ENCODE measurements at regions of chr4 and their contacts with region 1.

Region 1: DNA sequence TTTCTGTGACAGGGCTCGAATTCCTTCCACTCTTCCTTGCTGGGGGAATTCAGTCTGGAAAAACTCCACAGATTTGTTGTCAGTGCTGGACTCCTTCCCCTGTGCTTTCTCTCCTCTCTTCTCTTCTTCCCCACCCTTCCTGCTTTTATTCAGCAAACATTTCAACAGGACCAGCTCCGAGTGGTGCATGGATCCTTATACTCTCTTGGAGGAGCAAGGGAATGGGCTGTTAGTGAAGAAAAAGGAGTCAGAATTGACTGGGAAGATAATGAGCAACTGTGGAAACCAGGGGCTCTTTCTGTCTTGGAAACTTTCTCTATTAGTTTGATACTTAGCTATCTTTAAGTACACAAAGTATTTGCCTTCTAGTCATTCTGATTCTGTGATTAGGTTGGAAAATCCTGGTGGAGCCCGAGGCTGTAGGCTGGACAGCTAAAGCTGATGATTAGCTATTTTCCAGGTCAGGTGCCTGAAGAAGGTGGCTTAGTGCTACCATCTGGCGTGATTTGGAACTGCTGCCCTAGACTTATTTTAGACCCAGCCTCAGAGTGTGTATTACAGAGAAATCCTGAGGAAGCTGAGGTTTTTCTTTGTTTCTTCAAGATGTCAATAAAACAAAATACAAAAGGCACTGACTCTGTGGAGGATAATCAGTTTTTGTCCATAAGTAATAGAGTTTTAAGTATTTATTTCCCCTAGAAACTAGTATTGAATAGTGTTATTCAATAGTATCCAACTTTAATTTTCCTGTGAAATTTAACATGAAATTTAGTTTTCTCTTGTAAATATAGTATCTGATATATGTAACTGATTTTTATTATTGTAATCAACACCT is 38.4 kb downstream of the NAP1L5 start:
- DNase-seq: peak; percentile 51 to 88 (median 67)
- H3K4me3 ChIP-seq: no peak overlapping the region
- H3K27ac ChIP-seq: peak overlapping the region in 1 of 5 donors; percentile 40
- H3K4me1 ChIP-seq: peaks cover 0 to 4% of the 10 kb centered on the region in 2 donors
- H3K27me3 ChIP-seq: no peaks in the 10 kb centered on the region
- CTCF ChIP-seq: peak; percentile 77 to 85 (median 82)
- POLR2A ChIP-seq: no peak

Region 2: GRCh38 chr4:88143504-88143903 is 515.8 kb before region 1 on chr4:
- intact Hi-C with region 1: no loop called
- DNase-seq: no peak
- H3K4me3 ChIP-seq: no peak overlapping the region
- H3K27ac ChIP-seq: no peak overlapping the region
- H3K4me1 ChIP-seq: no peaks in the 10 kb centered on the region
- H3K27me3 ChIP-seq: no peaks in the 10 kb centered on the region
- CTCF ChIP-seq: no peak
- POLR2A ChIP-seq: no peak

Region 3: DNA sequence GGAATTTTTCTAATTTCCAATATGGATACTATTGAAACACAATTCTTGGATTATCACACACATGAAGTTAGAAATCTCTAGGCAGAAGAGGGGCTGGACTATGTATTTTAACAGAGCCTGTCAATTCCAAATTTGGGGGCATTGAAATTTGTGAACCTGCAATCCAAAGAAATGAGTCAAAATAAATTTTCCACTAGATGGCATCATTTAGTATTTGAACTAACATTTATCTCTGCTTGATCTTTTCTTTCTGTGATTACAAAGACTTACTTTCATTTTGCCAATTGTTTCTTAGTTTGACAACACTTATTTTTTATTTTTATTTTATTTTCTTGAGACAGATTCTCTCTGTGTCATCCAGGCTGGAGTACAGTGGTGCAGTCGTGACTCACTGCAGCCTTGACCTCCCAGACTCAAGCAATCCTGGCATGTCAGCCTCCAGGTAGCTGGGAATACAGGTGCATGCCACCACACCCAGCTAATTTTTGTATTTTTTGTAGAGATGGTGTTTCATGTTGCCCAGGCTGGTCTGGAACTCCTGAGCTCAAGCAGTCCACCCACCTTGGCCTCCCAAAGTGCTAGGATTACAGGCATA is 133.0 kb before region 1 on chr4:
- intact Hi-C with region 1: loop called (anchors 5 to 10 kb)
- DNase-seq: peak in 5 of 7 donors; percentile 22 to 61 (median 49)
- H3K4me3 ChIP-seq: no peak overlapping the region
- H3K27ac ChIP-seq: peak overlapping the region in 2 of 5 donors; percentile 51 to 60
- H3K4me1 ChIP-seq: peaks cover 17 to 35% of the 10 kb centered on the region in 2 donors
- H3K27me3 ChIP-seq: no peaks in the 10 kb centered on the region
- CTCF ChIP-seq: peak in 5 of 6 experiments; percentile 5 to 35 (median 31)
- POLR2A ChIP-seq: no peak

Region 4: GRCh38 chr4:88533937-88534750 is 125.1 kb before region 1 on chr4:
- intact Hi-C with region 1: loop called (anchors 5 to 10 kb)
- DNase-seq: no peak
- H3K4me3 ChIP-seq: no peak overlapping the region
- H3K27ac ChIP-seq: no peak overlapping the region
- H3K4me1 ChIP-seq: no peaks in the 10 kb centered on the region
- H3K27me3 ChIP-seq: no peaks in the 10 kb centered on the region
- CTCF ChIP-seq: no peak
- POLR2A ChIP-seq: no peak

Region 5: GRCh38 chr4:88549815-88550214 is 109.5 kb before region 1 on chr4:
- intact Hi-C with region 1: no loop called
- DNase-seq: no peak
- H3K4me3 ChIP-seq: no peak overlapping the region
- H3K27ac ChIP-seq: no peak overlapping the region
- H3K4me1 ChIP-seq: no peaks in the 10 kb centered on the region
- H3K27me3 ChIP-seq: no peaks in the 10 kb centered on the region
- CTCF ChIP-seq: no peak
- POLR2A ChIP-seq: no peak

Region 6: GRCh38 chr4:88591787-88592599 is 67.3 kb before region 1 on chr4 and contains the start of gene HERC3:
- intact Hi-C with region 1: loop called in 1 of 2 experiments (anchors 10 kb)
- DNase-seq: peak; percentile 92 to 95 (median 93)
- H3K4me3 ChIP-seq: peak within 1 kb of the TSS; percentile 67 to 84 (median 70)
- H3K27ac ChIP-seq: peak within 1 kb of the TSS; percentile 64 to 95 (median 93)
- H3K4me1 ChIP-seq: peaks cover 0 to 16% of the 10 kb centered on the region in 2 donors
- H3K27me3 ChIP-seq: no peaks in the 10 kb centered on the region
- CTCF ChIP-seq: peak in 4 of 6 experiments; percentile 16 to 26 (median 20)
- POLR2A ChIP-seq: peak in 1 of 2 donors; percentile 88
- total RNA-seq, gene HERC3: 6.4 to 40.1 (median 32.4) TPM

Region 7: GRCh38 chr4:88600176-88600838 is 59.0 kb before region 1 on chr4:
- intact Hi-C with region 1: loop called (anchors 10 kb)
- DNase-seq: no peak
- H3K4me3 ChIP-seq: peak overlapping the region in 1 of 4 donors; percentile 35
- H3K27ac ChIP-seq: peak overlapping the region in 3 of 5 donors; percentile 49 to 57 (median 53)
- H3K4me1 ChIP-seq: peaks cover 12 to 33% of the 10 kb centered on the region in 2 donors
- H3K27me3 ChIP-seq: no peaks in the 10 kb centered on the region
- CTCF ChIP-seq: no peak
- POLR2A ChIP-seq: no peak